ENCODE measurements at regions of chr5 and their contacts with region 1.

Region 1: DNA sequence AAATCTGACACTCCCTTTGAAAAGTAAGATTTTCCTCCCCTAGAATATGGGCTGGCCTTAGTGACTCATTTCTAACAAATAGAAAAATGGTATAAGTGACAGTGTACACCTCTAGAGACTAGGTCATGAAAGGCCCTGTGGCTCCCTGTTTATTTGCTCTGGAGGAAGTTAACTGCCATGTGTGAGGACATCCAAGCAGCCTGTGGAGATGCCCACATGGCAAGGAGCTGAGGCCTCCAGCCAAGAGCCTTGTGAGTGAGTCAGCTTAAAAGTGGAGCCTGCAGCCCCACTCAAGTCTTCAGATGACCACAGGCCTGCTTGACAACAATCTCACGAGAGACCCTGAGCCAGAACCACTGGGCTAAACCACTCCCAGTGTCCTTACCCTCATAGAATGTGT is 128.1 kb upstream of the LHFPL2 start:
- DNase-seq: peak in 1 of 2 experiments; percentile 39
- H3K4me3 ChIP-seq: no peak overlapping the region
- H3K27ac ChIP-seq: no peak overlapping the region
- H3K4me1 ChIP-seq: peaks cover 19% of the 10 kb centered on the region
- H3K27me3 ChIP-seq: no peaks in the 10 kb centered on the region
- CTCF ChIP-seq: no peak

Region 2: GRCh38 chr5:78787783-78788182 is 11.1 kb after region 1 on chr5:
- CTCF ChIA-PET with region 1: no interaction called
- POLR2A ChIA-PET with region 1: interaction called, 13 read pairs
- intact Hi-C with region 1: no loop called
- DNase-seq: no peak
- H3K4me3 ChIP-seq: no peak overlapping the region
- H3K27ac ChIP-seq: no peak overlapping the region
- H3K4me1 ChIP-seq: peaks cover 7% of the 10 kb centered on the region
- H3K27me3 ChIP-seq: no peaks in the 10 kb centered on the region
- CTCF ChIP-seq: no peak

Measured in PC-9 (cell line).